Activated CD4-positive, alpha-beta T cell treated with anti-CD3 and anti-CD28 coated beads for 36 hours (primary cell): ENCODE measurements at regions of chr2 and their contacts with region 1.

Region 1: GRCh38 chr2:206765242-206766056 is at the starts of genes FASTKD2 and MDH1B:
- DNase-seq: peak; percentile 93
- ATAC-seq: peak; percentile 87
- H3K4me3 Mint-ChIP-seq: peak within 1 kb of the TSS; percentile 93
- H3K27ac Mint-ChIP-seq: peak within 1 kb of the TSS; percentile 98
- H3K4me1 Mint-ChIP-seq: peaks cover 37% of the 10 kb centered on the region
- H3K27me3 Mint-ChIP-seq: no peaks in the 10 kb centered on the region
- total RNA-seq, gene FASTKD2: 33.9 to 37.0 TPM
- total RNA-seq, gene MDH1B: 0.83 to 1.3 TPM

Region 2: GRCh38 chr2:206085742-206086445 is 679.6 kb before region 1 on chr2 and contains the start of gene INO80D:
- CTCF ChIA-PET with region 1: no interaction called
- POLR2A ChIA-PET with region 1: no interaction called
- intact Hi-C with region 1: loop called in 1 of 2 experiments (anchors 5 kb)
- DNase-seq: peak; percentile 89
- ATAC-seq: peak; percentile 96
- H3K4me3 Mint-ChIP-seq: peak within 1 kb of the TSS; percentile 96
- H3K27ac Mint-ChIP-seq: peak within 1 kb of the TSS; percentile 99
- H3K4me1 Mint-ChIP-seq: peaks cover 28% of the 10 kb centered on the region
- H3K27me3 Mint-ChIP-seq: no peaks in the 10 kb centered on the region
- total RNA-seq, gene INO80D: 17.6 to 18.9 TPM

Region 3: DNA sequence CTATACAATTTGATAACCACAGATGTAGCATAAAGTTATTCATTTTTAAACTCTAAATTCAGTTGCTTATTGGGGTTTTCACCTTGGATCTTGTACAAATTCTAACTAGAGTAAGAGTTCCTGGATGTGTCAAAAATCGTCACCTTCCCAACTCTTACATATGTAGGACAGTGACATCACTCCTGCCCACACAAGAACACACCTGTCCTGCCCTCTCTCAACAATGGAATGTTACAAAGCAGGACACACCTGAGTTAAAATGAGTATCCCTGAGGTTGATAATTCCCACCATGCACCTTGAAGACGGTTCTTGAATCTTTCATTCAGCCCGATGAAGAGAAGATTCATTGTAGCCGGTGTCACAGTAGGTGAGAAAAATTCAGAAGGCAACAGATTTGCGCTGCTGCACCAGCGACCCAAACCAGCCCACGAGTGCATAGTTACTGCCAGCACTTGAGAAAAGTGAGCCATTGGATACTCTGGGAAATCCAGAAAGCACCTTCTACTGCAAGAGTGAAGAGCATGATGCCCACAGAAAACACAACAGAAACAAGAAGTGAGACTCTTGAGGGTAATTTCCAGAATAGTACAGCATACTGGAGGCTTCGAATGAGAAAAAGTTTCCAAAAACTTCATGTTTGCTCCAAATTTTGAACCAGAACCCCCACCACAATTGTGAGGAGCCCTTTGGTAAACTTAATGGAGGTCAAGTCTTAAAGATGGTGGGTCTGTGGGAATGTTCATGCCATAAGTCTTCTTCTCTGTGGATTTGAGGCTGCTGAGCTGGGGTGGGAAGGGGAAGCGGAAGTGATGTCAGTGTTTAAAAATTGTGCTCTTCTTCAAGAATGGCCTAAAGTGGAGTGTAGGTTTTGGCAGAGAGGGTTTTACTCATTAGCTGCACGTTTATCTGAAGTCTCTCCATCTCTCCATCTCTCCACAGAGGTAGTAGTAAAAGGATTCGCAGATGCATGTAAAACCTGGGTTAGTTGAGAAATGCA is 356.8 kb before region 1 on chr2:
- CTCF ChIA-PET with region 1: no interaction called
- POLR2A ChIA-PET with region 1: no interaction called
- intact Hi-C with region 1: no loop called
- DNase-seq: no peak
- ATAC-seq: no peak
- H3K4me3 Mint-ChIP-seq: no peak overlapping the region
- H3K27ac Mint-ChIP-seq: no peak overlapping the region
- H3K4me1 Mint-ChIP-seq: no peaks in the 10 kb centered on the region
- H3K27me3 Mint-ChIP-seq: peaks cover 4% of the 10 kb centered on the region

Region 4: GRCh38 chr2:206736935-206737334 is 28.5 kb before region 1 on chr2:
- CTCF ChIA-PET with region 1: interaction called, 4 read pairs
- POLR2A ChIA-PET with region 1: interaction called, 3 read pairs
- intact Hi-C with region 1: loop called (anchors 1 kb)
- DNase-seq: peak; percentile 28
- ATAC-seq: peak; percentile 97
- H3K4me3 Mint-ChIP-seq: no peak overlapping the region
- H3K27ac Mint-ChIP-seq: no peak overlapping the region
- H3K4me1 Mint-ChIP-seq: peaks cover 7% of the 10 kb centered on the region
- H3K27me3 Mint-ChIP-seq: peaks cover 13% of the 10 kb centered on the region

Region 5: GRCh38 chr2:206783718-206784117 is 18.3 kb after region 1 on chr2:
- CTCF ChIA-PET with region 1: interaction called, 25 read pairs
- POLR2A ChIA-PET with region 1: interaction called, 3 read pairs
- intact Hi-C with region 1: loop called in 1 of 2 experiments (anchors 1 kb)
- DNase-seq: no peak
- ATAC-seq: no peak
- H3K4me3 Mint-ChIP-seq: no peak overlapping the region
- H3K27ac Mint-ChIP-seq: no peak overlapping the region
- H3K4me1 Mint-ChIP-seq: peaks cover 30% of the 10 kb centered on the region
- H3K27me3 Mint-ChIP-seq: no peaks in the 10 kb centered on the region